ENCODE measurements at regions of chr1 and their contacts with region 1.

Region 1: DNA sequence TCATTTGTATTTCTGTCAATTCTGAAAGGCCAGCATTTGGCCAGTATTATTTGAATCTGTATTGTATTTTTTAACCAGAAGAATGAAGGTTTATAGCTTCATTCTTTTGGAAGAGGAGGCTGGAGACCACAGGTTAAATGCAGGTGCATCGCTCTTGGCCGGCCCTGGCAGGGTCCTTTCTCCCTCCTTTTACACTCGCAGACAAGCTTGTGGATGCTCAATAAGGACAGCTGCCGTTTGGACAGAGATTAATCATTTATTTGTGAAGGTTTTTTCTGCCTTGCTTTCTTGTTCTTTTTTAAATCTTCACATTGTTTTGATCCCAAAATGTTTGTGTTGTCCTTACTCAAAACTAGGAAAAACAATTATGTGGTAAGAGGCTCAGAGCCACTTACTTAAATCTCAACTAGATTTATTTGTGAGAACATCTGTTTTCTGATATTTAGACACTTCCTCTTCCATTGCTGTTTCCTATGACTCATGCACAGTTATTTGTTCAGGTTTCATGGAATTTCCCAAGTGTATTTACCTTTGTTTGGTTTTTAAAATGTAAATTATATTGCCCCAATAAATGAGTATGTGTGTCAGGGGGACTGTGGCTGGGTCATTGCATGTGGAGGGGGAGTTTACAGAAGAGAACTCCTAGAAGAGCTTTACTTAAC is 46.7 kb upstream of the LAMC2 start:
- DNase-seq: no peak
- ATAC-seq: no peak
- H3K4me3 ChIP-seq: no peak overlapping the region
- H3K27ac ChIP-seq: no peak overlapping the region
- H3K4me1 ChIP-seq: no peaks in the 10 kb centered on the region
- H3K27me3 ChIP-seq: no peaks in the 10 kb centered on the region

Region 2: GRCh38 chr1:182855911-182856310 is 283.5 kb before region 1 on chr1:
- intact Hi-C with region 1: loop called in 1 of 2 experiments (anchors 10 kb)
- DNase-seq: no peak
- ATAC-seq: no peak
- H3K4me3 ChIP-seq: no peak overlapping the region
- H3K27ac ChIP-seq: no peak overlapping the region
- H3K4me1 ChIP-seq: peaks cover 2 to 8% of the 10 kb centered on the region in 2 donors
- H3K27me3 ChIP-seq: no peaks in the 10 kb centered on the region

Measured in aorta (tissue), 5 donors.